Activated B cell treated with CpG ODN at 0.5 μM for 24 hours (primary cell): ENCODE measurements at regions of chr7 and their contacts with region 1.

Region 1: DNA sequence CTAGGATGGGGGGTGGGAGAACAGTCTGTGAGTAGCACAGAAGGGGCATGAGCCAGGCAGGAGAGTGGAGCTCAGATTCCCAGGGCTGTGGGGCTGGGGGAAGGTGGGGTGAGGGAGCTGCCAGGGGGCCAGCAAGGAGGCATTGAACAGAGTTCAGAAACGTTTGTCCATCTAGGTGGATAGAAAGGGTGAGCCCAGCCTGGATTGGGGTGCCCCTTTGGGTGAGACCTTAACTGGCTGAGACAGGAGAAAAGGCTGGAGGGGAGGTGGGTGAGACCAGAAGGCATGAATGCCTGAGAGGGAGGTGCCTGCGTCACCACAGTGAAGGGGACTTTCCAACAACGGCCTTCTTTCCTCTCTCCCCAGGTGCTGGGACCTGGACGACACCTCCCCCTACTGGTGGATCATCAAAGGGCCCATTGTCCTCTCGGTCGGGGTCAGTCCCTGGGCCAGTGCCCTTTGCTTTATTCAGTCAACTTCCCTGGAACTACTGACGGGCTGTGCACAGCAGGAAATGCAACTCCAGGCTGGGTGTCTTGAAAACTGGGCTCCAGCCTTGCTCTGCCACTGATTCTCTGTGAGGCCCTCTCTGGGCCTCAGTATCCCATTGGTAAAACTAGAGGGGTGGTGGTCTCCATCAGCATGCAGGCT is 11.0 kb downstream of the GHRHR start:
- DNase-seq: no peak
- ATAC-seq: peak; percentile 85
- H3K4me3 Mint-ChIP-seq: no peak overlapping the region
- H3K27ac Mint-ChIP-seq: no peak overlapping the region
- H3K4me1 Mint-ChIP-seq: peaks cover 14% of the 10 kb centered on the region
- H3K27me3 Mint-ChIP-seq: peaks cover 9% of the 10 kb centered on the region
- CTCF ChIP-seq: no peak

Region 2: GRCh38 chr7:30702200-30702599 is 272.5 kb before region 1 on chr7:
- CTCF ChIA-PET with region 1: no interaction called
- POLR2A ChIA-PET with region 1: no interaction called
- intact Hi-C with region 1: no loop called
- DNase-seq: no peak
- ATAC-seq: no peak
- H3K4me3 Mint-ChIP-seq: no peak overlapping the region
- H3K27ac Mint-ChIP-seq: no peak overlapping the region
- H3K4me1 Mint-ChIP-seq: no peaks in the 10 kb centered on the region
- H3K27me3 Mint-ChIP-seq: peaks cover 10% of the 10 kb centered on the region
- CTCF ChIP-seq: no peak

Region 3: GRCh38 chr7:30938435-30939316 is 36.1 kb before region 1 on chr7:
- CTCF ChIA-PET with region 1: interaction called, 6 read pairs
- POLR2A ChIA-PET with region 1: no interaction called
- intact Hi-C with region 1: loop called (anchors 2 kb)
- DNase-seq: peak; percentile 42
- ATAC-seq: peak; percentile 62
- H3K4me3 Mint-ChIP-seq: no peak overlapping the region
- H3K27ac Mint-ChIP-seq: no peak overlapping the region
- H3K4me1 Mint-ChIP-seq: no peaks in the 10 kb centered on the region
- H3K27me3 Mint-ChIP-seq: peaks cover 20% of the 10 kb centered on the region
- CTCF ChIP-seq: peak; percentile 38

Region 4: GRCh38 chr7:30963805-30964204 is 10.9 kb before region 1 on chr7 and contains the start of gene GHRHR:
- CTCF ChIA-PET with region 1: no interaction called
- POLR2A ChIA-PET with region 1: no interaction called
- intact Hi-C with region 1: no loop called
- DNase-seq: no peak
- ATAC-seq: no peak
- H3K4me3 Mint-ChIP-seq: no peak within 1 kb of the TSS
- H3K27ac Mint-ChIP-seq: no peak within 1 kb of the TSS
- H3K4me1 Mint-ChIP-seq: peaks cover 5% of the 10 kb centered on the region
- H3K27me3 Mint-ChIP-seq: peaks cover 2% of the 10 kb centered on the region
- CTCF ChIP-seq: no peak
- total RNA-seq, gene GHRHR: not detected in 2 replicates

Region 5: DNA sequence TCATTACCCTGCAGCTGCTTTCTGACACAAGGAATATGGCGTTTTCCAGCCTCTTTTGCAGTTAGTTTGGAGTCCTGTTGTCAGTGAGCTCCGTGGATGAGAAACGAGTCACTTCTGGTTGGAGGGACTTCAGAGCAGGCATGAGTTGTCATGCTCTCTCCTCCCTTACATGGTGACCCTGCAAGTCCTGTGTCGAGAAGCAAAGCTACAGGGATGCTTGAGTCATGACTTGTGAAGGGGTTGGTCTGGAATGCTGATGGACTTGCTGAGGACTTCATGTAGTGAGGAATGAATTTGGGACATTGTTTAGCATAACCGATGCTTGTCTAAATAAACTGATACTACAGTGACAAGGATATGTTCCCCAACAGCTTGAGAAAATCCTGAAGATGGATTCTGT is 186.2 kb after region 1 on chr7:
- CTCF ChIA-PET with region 1: no interaction called
- POLR2A ChIA-PET with region 1: no interaction called
- intact Hi-C with region 1: no loop called
- DNase-seq: no peak
- ATAC-seq: no peak
- H3K4me3 Mint-ChIP-seq: no peak overlapping the region
- H3K27ac Mint-ChIP-seq: no peak overlapping the region
- H3K4me1 Mint-ChIP-seq: no peaks in the 10 kb centered on the region
- H3K27me3 Mint-ChIP-seq: peaks cover 5% of the 10 kb centered on the region
- CTCF ChIP-seq: no peak